Astrocyte of the cerebellum (primary cell): ENCODE measurements at regions of chr12 and their contacts with region 1.

Region 1: GRCh38 chr12:188910-189621 is 24.9 kb downstream of the SLC6A12 start:
- DNase-seq: no peak
- H3K4me3 ChIP-seq: peak overlapping the region; percentile 40
- CTCF ChIP-seq: peak; percentile 65

Region 2: GRCh38 chr12:106118-106591 is 82.9 kb before region 1 on chr12:
- in situ Hi-C with region 1: loop called (anchors 5 kb)
- DNase-seq: no peak
- H3K4me3 ChIP-seq: no peak overlapping the region
- CTCF ChIP-seq: no peak